Activated CD4-positive, alpha-beta memory T cell treated with anti-CD3 and anti-CD28 coated beads, Interleukin-2, amount 10 ng/mL, durations not matched to agents 7 days and 5 days (primary cell): ENCODE measurements at regions of chr7 and their contacts with region 1.

Region 1: DNA sequence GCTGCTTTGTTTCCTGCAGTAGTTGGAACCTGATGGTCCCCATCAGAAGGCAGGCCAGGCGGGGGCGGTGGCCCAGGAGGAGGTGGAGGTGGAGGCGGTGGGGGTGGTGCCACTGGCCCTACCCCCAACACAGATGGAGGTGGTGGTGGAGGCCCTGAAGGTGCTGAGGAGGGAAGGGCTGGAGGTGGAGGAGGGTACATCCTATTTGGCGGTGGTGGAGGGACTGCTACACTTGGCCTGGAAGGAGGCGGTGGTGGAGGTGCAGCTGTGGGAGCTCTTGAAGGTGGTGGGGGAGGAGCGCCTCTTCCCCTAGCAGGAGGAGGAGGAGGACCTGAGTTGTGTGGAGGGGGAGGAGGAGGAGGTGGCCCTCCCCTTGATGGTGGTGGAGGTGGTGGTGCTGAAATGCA is 36.8 kb downstream of the LMOD2 start:
- DNase-seq: no peak
- H3K4me3 Mint-ChIP-seq: no peak overlapping the region
- H3K27ac Mint-ChIP-seq: no peak overlapping the region
- H3K4me1 Mint-ChIP-seq: no peaks in the 10 kb centered on the region
- H3K27me3 Mint-ChIP-seq: no peaks in the 10 kb centered on the region

Region 2: GRCh38 chr7:123705211-123705901 is 12.9 kb after region 1 on chr7:
- CTCF ChIA-PET with region 1: interaction called, 22 read pairs
- POLR2A ChIA-PET with region 1: no interaction called
- DNase-seq: no peak
- H3K4me3 Mint-ChIP-seq: no peak overlapping the region
- H3K27ac Mint-ChIP-seq: no peak overlapping the region
- H3K4me1 Mint-ChIP-seq: peaks cover 10% of the 10 kb centered on the region
- H3K27me3 Mint-ChIP-seq: no peaks in the 10 kb centered on the region